ENCODE measurements at regions of chr12 and their contacts with region 1.

Region 1: DNA sequence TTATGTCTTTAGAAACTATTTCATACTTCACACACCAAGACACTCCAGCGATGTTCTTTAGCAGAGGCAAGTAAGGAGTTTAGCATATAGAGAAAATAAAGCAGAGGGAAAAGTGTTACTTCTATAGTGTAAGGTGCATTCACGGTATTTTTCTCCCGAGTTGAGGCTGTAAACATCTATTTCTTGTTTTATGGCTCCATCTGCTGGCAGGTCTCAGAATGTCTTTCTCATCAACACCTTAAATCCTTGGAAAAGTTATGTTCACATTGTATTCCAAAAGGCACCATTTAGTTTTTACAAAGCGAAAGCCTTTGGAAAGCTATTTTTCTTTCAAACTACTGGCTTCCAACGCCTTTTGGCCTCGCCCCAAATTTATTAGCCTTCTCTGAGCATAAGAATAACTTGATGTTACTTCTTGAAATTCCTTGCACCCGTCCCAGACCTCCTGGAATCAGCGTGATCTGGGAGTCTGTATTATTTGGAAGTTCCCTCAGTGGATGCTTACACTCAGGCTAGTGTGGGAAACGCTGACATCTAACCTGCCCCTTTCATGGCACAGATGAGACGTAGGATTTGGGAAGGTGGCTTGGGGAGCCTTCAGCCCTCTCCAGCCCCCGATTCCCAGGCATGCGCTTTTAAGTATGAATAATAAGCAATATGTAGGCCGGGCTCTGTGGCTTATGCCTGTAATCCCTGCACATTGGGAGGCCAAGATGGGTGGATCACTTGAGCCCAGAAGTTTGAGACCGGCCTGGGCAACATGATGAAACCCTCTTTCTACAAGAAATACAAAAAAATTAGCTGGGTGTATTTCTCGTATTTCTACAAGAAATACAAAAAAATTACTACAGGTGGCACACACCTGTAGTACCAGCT is 1.9 kb upstream of the PIWIL1 start:
- DNase-seq: peak; percentile 79
- H3K4me3 Mint-ChIP-seq: no peak overlapping the region
- H3K27ac Mint-ChIP-seq: no peak overlapping the region
- H3K4me1 Mint-ChIP-seq: peaks cover 3% of the 10 kb centered on the region
- H3K27me3 Mint-ChIP-seq: peaks cover 13% of the 10 kb centered on the region

Region 2: GRCh38 chr12:129997239-129997638 is 338.5 kb before region 1 on chr12:
- intact Hi-C with region 1: no loop called
- DNase-seq: no peak
- H3K4me3 Mint-ChIP-seq: no peak overlapping the region
- H3K27ac Mint-ChIP-seq: no peak overlapping the region
- H3K4me1 Mint-ChIP-seq: no peaks in the 10 kb centered on the region
- H3K27me3 Mint-ChIP-seq: no peaks in the 10 kb centered on the region

Region 3: DNA sequence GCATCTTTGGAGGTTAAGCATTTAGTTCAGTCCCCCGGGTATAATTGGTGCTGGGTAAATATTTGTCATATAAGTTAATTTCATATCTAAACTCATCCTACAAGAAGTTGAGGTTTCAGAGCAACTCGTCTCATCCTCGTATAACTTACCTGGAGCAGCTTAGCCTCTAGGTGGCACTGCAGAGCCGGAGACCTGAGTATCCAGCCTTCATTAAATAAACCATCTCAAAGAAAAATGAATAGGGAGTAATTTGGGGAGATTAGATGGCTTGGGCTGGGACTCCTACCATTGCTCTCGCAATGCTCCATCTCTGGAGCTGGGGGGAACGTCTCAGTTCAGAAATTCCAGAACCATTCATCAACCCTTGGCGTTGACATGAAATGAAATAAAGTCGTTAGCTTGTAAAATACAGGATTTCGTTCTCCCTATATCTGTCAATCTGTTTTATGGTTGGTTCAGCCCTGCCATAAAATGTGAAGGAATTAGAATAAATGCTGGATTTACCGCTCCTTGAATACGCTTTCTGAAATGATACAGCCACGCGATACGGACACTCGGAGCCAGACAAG is 309.1 kb before region 1 on chr12:
- intact Hi-C with region 1: loop called (anchors 5 kb)
- DNase-seq: peak; percentile 79
- H3K4me3 Mint-ChIP-seq: no peak overlapping the region
- H3K27ac Mint-ChIP-seq: no peak overlapping the region
- H3K4me1 Mint-ChIP-seq: no peaks in the 10 kb centered on the region
- H3K27me3 Mint-ChIP-seq: peaks cover under 1% of the 10 kb centered on the region

Region 4: DNA sequence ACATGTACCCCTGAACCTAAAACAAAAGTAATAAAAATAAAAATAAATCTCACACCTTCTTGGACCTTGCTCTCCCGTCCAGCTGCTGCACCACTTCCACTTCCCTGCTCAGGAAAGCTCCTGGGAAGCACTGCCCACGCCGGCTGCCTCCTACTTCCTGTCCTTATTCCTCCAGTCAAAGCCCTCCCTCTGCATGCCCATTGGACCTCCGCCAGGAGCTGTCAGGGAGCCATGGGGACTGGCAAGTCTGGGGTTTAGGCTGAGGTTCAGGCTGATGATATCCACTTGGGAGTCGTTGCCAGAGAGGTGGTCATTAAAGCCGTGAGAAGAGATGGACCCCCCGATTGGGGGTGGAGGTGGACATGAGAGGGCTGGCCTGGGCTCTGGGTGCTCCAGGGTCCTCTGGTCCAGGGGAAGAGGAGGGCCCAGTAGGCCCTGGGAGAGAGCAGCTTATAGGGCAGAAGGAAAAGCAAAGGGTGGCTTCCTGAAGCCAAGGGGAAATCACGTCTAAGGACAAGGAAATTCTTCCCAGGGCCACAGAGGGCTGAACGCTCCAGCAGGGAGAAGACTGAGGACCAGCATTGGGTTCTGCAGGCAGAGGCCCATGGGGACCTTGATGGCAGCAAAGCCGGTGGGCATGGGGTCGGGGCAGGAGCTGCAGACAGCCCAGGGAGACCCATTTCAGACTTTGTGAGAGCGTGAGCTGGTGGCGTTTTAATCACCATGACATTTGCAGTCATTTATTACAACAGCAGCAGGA is 94.7 kb before region 1 on chr12:
- intact Hi-C with region 1: no loop called
- DNase-seq: no peak
- H3K4me3 Mint-ChIP-seq: no peak overlapping the region
- H3K27ac Mint-ChIP-seq: no peak overlapping the region
- H3K4me1 Mint-ChIP-seq: no peaks in the 10 kb centered on the region
- H3K27me3 Mint-ChIP-seq: no peaks in the 10 kb centered on the region

Region 5: GRCh38 chr12:130300737-130301535 is 34.8 kb before region 1 on chr12:
- intact Hi-C with region 1: no loop called
- DNase-seq: no peak
- H3K4me3 Mint-ChIP-seq: no peak overlapping the region
- H3K27ac Mint-ChIP-seq: no peak overlapping the region
- H3K4me1 Mint-ChIP-seq: no peaks in the 10 kb centered on the region
- H3K27me3 Mint-ChIP-seq: no peaks in the 10 kb centered on the region

Measured in activated CD4-positive, alpha-beta T cell treated with anti-CD3 and anti-CD28 coated beads, Interleukin-2, amount 10 ng/mL, durations not matched to agents 24 days and 14 days (primary cell).